ENCODE measurements at regions of chr18 and their contacts with region 1.

Region 1: DNA sequence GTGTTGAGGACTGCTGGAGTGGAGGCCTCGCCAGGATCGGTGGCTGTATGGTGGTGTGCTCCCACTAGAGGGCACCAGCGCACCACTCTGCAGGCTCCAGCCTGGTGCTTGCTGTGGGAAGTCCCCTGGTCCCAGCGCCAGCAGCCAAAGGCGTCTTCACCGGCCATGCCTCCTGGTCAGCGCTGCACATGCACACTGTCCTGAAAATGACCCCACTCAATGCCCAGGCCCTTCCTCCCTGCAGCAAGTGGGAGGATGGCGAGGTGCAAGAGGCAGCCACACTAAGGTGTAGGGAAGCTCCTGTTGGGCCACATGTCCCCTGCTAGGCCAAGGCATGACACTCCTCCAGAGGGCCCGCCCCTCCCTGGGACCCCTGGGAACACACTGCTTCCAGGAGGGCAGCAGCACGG is 136.5 kb downstream of the CTIF start:
- DNase-seq: peak; percentile 91
- ATAC-seq: peak; percentile 97
- H3K4me3 Mint-ChIP-seq: no peak overlapping the region
- H3K27ac Mint-ChIP-seq: no peak overlapping the region
- H3K4me1 Mint-ChIP-seq: peaks cover 2% of the 10 kb centered on the region
- H3K27me3 Mint-ChIP-seq: no peaks in the 10 kb centered on the region

Region 2: DNA sequence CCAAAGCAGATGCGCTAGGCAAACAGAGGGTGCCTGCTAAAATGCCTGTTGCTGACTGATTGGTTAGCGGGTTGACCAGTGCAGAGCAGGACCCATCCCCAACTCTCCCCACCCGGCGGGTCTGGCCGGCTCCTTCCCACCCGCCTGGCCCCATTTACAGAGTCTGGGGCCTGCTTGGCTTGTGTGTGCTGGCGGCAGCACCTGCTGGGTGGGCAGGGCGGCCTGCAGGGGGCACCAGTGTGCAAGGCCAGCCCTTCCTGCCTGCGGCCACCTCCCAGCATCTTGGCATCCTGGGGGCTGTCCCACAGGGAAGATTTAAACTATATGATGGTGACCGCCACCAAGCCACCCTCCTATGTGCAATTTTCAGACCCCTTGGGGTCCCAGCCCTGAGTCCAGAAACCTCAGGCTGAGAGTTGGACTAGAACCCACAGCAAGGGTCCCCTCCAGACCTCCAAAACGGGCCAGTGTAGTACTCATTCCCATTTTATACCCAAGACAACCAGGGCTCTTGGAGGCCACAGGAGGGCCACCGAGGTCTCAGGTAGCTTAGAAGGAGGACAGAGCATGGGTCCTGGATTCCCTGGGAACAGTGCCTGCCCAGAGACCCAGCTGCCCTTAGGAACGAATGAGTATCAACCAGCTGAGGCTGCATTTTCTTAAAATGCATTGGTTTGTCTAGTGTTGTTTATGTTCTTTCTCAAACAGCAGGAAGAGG is 101.8 kb after region 1 on chr18:
- CTCF ChIA-PET with region 1: interaction called, 3 read pairs
- POLR2A ChIA-PET with region 1: no interaction called
- intact Hi-C with region 1: loop called in 1 of 2 experiments (anchors 2 kb)
- DNase-seq: peak; percentile 84
- ATAC-seq: peak; percentile 97
- H3K4me3 Mint-ChIP-seq: no peak overlapping the region
- H3K27ac Mint-ChIP-seq: no peak overlapping the region
- H3K4me1 Mint-ChIP-seq: peaks cover 6% of the 10 kb centered on the region
- H3K27me3 Mint-ChIP-seq: peaks cover 3% of the 10 kb centered on the region

Region 3: DNA sequence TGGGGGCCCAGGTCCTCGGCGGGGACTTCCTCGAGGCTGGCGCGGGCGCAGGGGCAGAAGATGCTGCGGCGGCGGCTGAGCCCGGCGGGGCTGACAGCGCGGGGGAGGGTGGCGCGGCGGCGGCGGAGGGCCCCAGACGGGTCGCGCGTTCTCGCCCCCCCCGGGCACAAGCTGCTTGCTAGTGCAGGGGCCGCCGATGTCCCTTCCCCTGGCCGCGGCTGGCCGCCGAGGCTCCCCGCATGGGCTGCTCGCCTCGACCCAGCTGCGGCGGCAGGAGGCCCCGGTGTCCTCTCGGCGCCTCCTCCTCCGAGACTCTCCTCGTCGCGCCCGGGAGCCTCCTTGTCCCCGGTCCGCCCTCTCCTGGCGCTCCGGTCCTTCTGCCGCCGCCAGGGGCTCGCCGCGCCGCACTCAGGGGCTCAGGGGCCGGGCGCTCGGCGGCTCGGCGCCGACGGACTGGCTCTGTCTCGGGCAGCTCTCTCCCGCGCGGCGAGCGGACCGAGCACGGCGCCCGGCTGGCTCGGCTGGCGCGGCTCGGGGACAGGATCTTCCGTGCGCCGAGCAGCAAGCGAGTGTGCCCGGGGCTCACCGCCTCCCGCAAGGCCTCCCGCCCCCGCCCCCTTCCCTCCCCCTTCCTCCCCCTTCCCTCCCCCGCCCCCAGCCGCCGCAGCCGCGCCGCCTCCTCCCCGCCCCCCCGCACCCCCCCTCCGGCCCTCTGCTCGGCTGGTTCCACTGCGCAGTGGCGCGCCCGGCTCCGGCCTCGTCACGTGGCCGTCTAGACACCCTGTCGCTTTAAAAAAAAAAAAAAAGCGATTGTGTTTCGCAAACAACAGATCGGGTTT is 276.3 kb after region 1 on chr18:
- CTCF ChIA-PET with region 1: no interaction called
- POLR2A ChIA-PET with region 1: no interaction called
- intact Hi-C with region 1: loop called in 1 of 2 experiments (anchors 5 kb)
- DNase-seq: peak; percentile 84
- ATAC-seq: peak; percentile 42
- H3K4me3 Mint-ChIP-seq: peak overlapping the region; percentile 97
- H3K27ac Mint-ChIP-seq: peak overlapping the region; percentile 88
- H3K4me1 Mint-ChIP-seq: peaks cover 41% of the 10 kb centered on the region
- H3K27me3 Mint-ChIP-seq: no peaks in the 10 kb centered on the region

Region 4: GRCh38 chr18:49178736-49179135 is 503.4 kb after region 1 on chr18:
- CTCF ChIA-PET with region 1: no interaction called
- POLR2A ChIA-PET with region 1: no interaction called
- intact Hi-C with region 1: loop called in 1 of 2 experiments (anchors 1 kb)
- DNase-seq: peak; percentile 17
- ATAC-seq: no peak
- H3K4me3 Mint-ChIP-seq: no peak overlapping the region
- H3K27ac Mint-ChIP-seq: no peak overlapping the region
- H3K4me1 Mint-ChIP-seq: peaks cover 21% of the 10 kb centered on the region
- H3K27me3 Mint-ChIP-seq: no peaks in the 10 kb centered on the region

Region 5: DNA sequence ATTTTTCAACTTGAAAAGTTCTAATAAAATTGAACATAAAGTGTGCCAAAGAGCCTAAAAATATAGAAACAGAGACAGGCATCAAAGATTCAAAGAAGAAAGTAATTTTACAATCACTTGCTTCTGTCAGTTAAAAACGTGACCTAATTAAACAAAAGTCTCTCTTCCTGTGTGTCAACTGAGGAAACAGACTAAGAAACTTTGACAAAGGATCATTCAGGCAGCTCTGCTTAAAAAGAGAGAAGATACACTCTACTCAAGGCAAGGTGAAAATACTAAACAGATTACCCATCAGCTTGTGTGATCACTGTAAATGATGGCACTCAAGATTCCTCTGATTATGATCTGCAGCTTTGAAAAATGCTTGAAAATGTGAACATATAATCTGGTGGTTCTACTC is 737.3 kb after region 1 on chr18:
- CTCF ChIA-PET with region 1: interaction called, 3 read pairs
- POLR2A ChIA-PET with region 1: no interaction called
- intact Hi-C with region 1: loop called (anchors 2 to 10 kb)
- DNase-seq: no peak
- ATAC-seq: no peak
- H3K4me3 Mint-ChIP-seq: no peak overlapping the region
- H3K27ac Mint-ChIP-seq: peak overlapping the region; percentile 65
- H3K4me1 Mint-ChIP-seq: peaks cover 39% of the 10 kb centered on the region
- H3K27me3 Mint-ChIP-seq: no peaks in the 10 kb centered on the region

Region 6: GRCh38 chr18:49784427-49785185 is 1109.2 kb after region 1 on chr18:
- CTCF ChIA-PET with region 1: no interaction called
- POLR2A ChIA-PET with region 1: no interaction called
- intact Hi-C with region 1: loop called in 1 of 2 experiments (anchors 10 kb)
- DNase-seq: no peak
- ATAC-seq: no peak
- H3K4me3 Mint-ChIP-seq: no peak overlapping the region
- H3K27ac Mint-ChIP-seq: no peak overlapping the region
- H3K4me1 Mint-ChIP-seq: peaks cover 40% of the 10 kb centered on the region
- H3K27me3 Mint-ChIP-seq: no peaks in the 10 kb centered on the region